Activated CD4-positive, alpha-beta T cell treated with anti-CD3 and anti-CD28 coated beads for 36 hours (primary cell): ENCODE measurements at regions of chr14 and their contacts with region 1.

Region 1: DNA sequence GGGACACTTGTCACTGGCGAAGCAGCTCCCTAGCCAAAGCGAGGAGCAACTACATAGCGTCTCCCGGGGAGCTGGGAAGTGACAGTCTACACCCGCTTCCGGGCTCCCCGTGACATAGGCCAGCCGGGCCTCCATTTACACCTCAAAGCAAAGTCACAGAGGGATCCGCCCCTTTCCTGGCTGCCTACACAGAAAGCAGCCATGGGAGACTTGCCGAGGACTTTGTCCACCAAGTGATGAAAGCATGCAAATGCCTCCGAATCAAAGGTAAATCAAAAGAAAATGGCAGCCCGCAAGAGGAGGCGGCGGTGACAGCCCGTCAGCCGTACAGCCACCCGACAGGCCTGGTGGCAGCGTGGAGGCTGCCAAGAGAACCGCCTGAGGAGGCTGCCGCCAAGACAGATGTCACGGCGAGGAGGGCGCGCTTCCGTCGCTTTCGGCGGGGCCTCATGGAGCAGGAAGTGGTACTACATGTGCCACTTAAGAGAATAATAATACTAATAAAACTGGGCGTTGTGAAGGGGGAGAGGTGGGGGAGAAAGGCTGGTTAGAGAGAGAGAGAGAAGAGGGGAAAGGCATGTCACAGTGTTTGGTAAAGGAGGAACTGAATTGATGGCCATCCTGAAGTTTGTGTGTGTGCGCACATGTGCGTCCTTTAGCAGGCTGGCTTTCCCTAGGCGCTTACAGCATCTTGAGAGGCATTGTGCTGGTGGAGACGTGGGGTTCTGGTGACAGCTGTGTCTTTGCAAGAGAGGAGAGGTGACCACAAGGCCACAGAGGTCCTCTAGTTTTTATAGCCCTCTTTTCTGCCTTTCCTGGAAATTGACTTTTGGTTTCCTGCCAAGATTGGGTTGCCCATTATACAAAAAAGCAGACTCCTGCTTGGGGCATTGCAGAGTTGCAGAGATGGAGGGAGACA is 661.7 kb downstream of the VRK1 start:
- DNase-seq: peak; percentile 89
- ATAC-seq: peak; percentile 81
- H3K4me3 Mint-ChIP-seq: peak overlapping the region; percentile 87
- H3K27ac Mint-ChIP-seq: peak overlapping the region; percentile 98
- H3K4me1 Mint-ChIP-seq: peaks cover 41% of the 10 kb centered on the region
- H3K27me3 Mint-ChIP-seq: no peaks in the 10 kb centered on the region

Region 2: DNA sequence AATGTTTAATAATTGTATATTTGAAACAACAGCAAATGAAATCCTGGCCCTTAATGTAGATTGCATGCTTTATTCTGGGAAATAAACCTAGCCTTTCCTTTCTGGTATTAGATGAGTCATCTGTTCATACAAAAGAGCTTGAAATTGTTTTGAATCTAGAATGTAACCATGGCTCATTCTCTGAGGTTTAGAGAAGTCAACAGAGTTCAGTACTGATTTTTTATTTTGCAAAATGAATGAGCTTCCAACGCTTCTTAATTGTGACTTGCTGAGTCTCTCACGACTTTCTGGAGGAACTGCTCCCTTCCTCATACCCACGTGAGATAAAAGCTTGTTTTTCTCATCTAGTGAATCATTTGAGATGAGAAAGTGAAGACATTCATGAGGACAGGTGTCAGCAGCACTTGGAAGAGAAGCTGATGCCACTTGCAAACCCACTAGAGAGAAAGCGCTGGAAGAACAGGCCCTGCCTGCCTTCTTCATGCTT is 152.1 kb before region 1 on chr14:
- CTCF ChIA-PET with region 1: no interaction called
- POLR2A ChIA-PET with region 1: interaction called, 6 read pairs
- intact Hi-C with region 1: loop called (anchors 2 to 5 kb)
- DNase-seq: peak; percentile 41
- ATAC-seq: peak; percentile 85
- H3K4me3 Mint-ChIP-seq: no peak overlapping the region
- H3K27ac Mint-ChIP-seq: peak overlapping the region; percentile 90
- H3K4me1 Mint-ChIP-seq: peaks cover 31% of the 10 kb centered on the region
- H3K27me3 Mint-ChIP-seq: no peaks in the 10 kb centered on the region

Region 3: DNA sequence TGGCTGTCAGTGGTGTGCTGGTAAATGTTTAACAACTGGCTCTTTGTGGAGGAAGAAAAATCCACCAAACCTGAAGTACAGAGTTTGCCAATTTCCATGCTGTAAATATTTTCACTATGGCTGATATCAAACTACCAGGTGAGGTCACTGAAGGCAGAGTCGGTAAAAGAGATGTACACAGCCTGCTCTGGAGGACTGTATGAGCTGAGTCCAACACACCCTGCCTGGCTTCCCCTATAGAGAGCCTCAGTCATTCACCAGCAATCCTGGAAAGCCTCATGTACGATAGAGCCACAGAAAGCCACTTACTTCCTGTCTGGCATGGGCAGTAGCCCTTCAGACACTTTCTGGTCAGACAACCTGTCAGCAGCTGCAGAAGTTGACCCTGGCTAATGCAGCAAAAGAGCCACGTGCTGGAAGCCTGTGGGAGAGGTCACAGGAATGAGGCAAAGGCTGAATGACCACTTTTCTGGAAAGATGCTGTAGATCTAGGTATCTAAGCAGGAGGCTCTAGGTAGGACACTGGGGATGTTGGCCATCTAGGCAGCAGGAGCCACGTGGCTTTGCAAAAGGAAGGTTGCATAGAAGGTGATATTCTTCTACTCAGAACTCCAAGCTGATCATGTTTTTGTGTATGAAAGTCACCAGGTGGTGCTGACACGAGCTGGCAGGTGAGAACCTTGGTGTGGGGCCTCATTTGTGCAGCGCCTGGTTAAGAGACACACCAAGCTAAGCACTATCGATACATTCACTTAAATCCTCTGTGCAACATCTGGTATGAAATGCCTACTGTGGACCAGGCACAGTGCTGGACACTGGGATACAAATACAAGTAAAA is 107.8 kb before region 1 on chr14:
- CTCF ChIA-PET with region 1: no interaction called
- POLR2A ChIA-PET with region 1: no interaction called
- intact Hi-C with region 1: no loop called
- DNase-seq: no peak
- ATAC-seq: no peak
- H3K4me3 Mint-ChIP-seq: no peak overlapping the region
- H3K27ac Mint-ChIP-seq: no peak overlapping the region
- H3K4me1 Mint-ChIP-seq: peaks cover 8% of the 10 kb centered on the region
- H3K27me3 Mint-ChIP-seq: no peaks in the 10 kb centered on the region

Region 4: GRCh38 chr14:97408937-97409815 is 49.7 kb before region 1 on chr14:
- CTCF ChIA-PET with region 1: no interaction called
- POLR2A ChIA-PET with region 1: no interaction called
- intact Hi-C with region 1: loop called (anchors 1 to 2 kb)
- DNase-seq: peak; percentile 74
- ATAC-seq: peak; percentile 86
- H3K4me3 Mint-ChIP-seq: peak overlapping the region; percentile 57
- H3K27ac Mint-ChIP-seq: peak overlapping the region; percentile 89
- H3K4me1 Mint-ChIP-seq: peaks cover 32% of the 10 kb centered on the region
- H3K27me3 Mint-ChIP-seq: peaks cover 4% of the 10 kb centered on the region

Region 5: GRCh38 chr14:97620066-97620465 is 161.1 kb after region 1 on chr14:
- CTCF ChIA-PET with region 1: no interaction called
- POLR2A ChIA-PET with region 1: no interaction called
- intact Hi-C with region 1: loop called in 1 of 2 experiments (anchors 1 kb)
- DNase-seq: no peak
- ATAC-seq: no peak
- H3K4me3 Mint-ChIP-seq: peak overlapping the region; percentile 67
- H3K27ac Mint-ChIP-seq: peak overlapping the region; percentile 93
- H3K4me1 Mint-ChIP-seq: peaks cover 45% of the 10 kb centered on the region
- H3K27me3 Mint-ChIP-seq: no peaks in the 10 kb centered on the region

Region 6: GRCh38 chr14:97866663-97867062 is 407.7 kb after region 1 on chr14:
- CTCF ChIA-PET with region 1: no interaction called
- POLR2A ChIA-PET with region 1: no interaction called
- intact Hi-C with region 1: loop called in 1 of 2 experiments (anchors 1 kb)
- DNase-seq: no peak
- ATAC-seq: peak; percentile 86
- H3K4me3 Mint-ChIP-seq: no peak overlapping the region
- H3K27ac Mint-ChIP-seq: no peak overlapping the region
- H3K4me1 Mint-ChIP-seq: peaks cover 19% of the 10 kb centered on the region
- H3K27me3 Mint-ChIP-seq: no peaks in the 10 kb centered on the region

Region 7: GRCh38 chr14:98138666-98139065 is 679.7 kb after region 1 on chr14:
- CTCF ChIA-PET with region 1: no interaction called
- POLR2A ChIA-PET with region 1: no interaction called
- intact Hi-C with region 1: loop called in 1 of 2 experiments (anchors 10 kb)
- DNase-seq: peak; percentile 76
- ATAC-seq: peak; percentile 43
- H3K4me3 Mint-ChIP-seq: peak overlapping the region; percentile 65
- H3K27ac Mint-ChIP-seq: peak overlapping the region; percentile 98
- H3K4me1 Mint-ChIP-seq: peaks cover 87% of the 10 kb centered on the region
- H3K27me3 Mint-ChIP-seq: no peaks in the 10 kb centered on the region

Region 8: DNA sequence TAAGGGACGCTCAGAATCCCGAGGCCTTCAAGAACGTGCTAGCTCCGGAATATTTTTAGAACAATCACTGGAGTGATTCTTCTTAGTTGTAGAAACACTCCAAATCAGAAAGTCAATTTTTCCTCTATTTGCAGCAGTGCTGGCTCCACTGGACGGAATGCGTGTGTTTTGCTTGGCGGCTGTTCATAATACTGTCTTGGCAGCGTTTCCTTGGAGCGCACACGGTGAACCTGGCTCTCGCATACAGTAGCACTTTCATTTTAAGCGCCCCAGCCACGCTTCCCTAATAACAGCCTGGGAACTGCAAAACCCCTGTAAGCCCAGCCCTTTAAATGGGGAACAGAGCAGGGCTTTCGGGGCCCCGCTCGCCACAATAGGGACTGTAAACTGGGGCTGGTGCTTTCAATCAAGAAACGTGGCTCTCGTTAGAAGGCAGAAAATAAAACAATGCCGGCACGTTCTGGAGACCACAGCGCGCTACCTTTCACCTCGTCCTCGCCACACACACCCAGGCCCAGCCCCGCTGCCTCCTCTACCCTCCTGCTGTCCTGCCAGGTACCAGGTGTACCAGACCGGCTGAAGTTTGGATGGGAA is 1733.2 kb after region 1 on chr14:
- CTCF ChIA-PET with region 1: no interaction called
- POLR2A ChIA-PET with region 1: no interaction called
- intact Hi-C with region 1: loop called in 1 of 2 experiments (anchors 10 kb)
- DNase-seq: no peak
- ATAC-seq: peak; percentile 8
- H3K4me3 Mint-ChIP-seq: peak overlapping the region; percentile 79
- H3K27ac Mint-ChIP-seq: peak overlapping the region; percentile 99
- H3K4me1 Mint-ChIP-seq: peaks cover 89% of the 10 kb centered on the region
- H3K27me3 Mint-ChIP-seq: no peaks in the 10 kb centered on the region